T-cell (primary cell): ENCODE measurements at regions of chrX and their contacts with region 1.

Region 1: DNA sequence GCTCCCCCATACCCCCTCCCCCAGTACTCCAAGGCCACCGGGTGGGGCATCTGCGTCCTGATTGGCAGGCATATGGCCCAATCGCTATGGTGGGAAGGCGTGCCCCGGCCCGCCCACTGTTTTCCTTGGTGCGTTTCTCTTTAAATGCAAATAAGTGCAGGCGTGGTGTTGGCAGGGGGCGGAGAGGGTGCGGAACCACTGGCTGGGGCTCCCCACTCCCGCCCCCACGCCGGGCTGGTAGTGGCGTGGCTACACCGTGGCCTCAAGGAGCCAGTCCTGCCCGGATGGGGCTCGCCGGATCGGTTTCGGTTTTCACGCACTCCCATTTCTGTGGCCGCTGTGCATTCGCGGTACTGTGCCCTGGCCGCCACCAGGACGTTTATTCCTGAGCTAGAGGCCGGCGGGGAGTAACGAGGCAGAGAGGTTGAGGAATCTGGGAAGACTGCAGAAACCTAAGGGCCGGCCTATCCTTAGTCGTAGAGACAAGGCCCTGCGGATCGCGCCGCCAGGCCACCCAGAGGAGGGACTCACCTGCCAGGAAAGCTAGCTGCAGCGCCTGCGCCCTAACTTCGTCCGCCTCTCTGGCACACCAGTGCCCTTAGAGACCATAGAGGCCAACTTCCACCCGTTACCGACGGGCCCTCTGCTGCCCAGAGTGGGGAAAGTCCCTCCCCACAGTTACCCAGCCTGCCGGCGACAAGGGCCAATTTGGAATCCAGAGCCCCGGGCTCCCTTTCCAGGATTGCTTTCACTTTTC is 405 bp upstream of the AMER1 start:
- DNase-seq: peak; percentile 75 to 91 (median 82)
- ATAC-seq: peak; percentile 86 to 90 (median 88)
- H3K4me3 ChIP-seq: peak overlapping the region; percentile 64 to 84
- H3K4me3 Mint-ChIP-seq: peak overlapping the region; percentile 87 to 92 (median 88)
- H3K27ac ChIP-seq: peak overlapping the region; percentile 97
- H3K27ac Mint-ChIP-seq: peak overlapping the region; percentile 94
- H3K4me1 ChIP-seq: peaks cover 0 to 23% of the 10 kb centered on the region in 2 experiments
- H3K4me1 Mint-ChIP-seq: peaks cover 11 to 25% (median 18%) of the 10 kb centered on the region in 3 donors
- H3K27me3 ChIP-seq: no peaks in the 10 kb centered on the region
- H3K27me3 Mint-ChIP-seq: no peaks in the 10 kb centered on the region

Region 2: DNA sequence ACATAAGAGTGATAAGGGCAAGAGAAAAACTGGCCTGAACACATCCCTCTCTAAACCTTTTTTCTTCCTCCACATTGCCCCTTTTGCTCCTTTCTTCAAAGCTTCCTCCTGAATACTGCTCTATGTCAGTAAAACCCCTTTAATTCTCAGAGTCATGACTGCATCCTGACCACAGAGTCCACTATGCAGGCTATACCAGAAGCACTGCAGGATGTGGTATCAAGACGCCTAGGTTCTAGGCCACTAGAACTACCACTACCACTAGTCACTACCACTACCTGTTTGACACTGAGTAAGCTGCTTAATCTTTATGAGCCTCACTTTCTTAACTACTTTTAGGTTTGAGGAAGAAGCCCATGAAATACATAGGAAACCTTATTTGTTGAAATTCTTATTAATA is 459.6 kb before region 1 on chrX:
- CTCF ChIA-PET with region 1: no interaction called
- POLR2A ChIA-PET with region 1: interaction called in 1 of 2 experiments, 10 read pairs
- DNase-seq: peak in 25 of 35 experiments; percentile 1 to 50 (median 11)
- ATAC-seq: peak; percentile 77 to 97 (median 95)
- H3K4me3 ChIP-seq: no peak overlapping the region
- H3K4me3 Mint-ChIP-seq: peak overlapping the region in 1 of 3 donors; percentile 3
- H3K27ac ChIP-seq: peak overlapping the region; percentile 53
- H3K27ac Mint-ChIP-seq: peak overlapping the region; percentile 53 to 65
- H3K4me1 ChIP-seq: peaks cover 0 to 26% of the 10 kb centered on the region in 2 experiments
- H3K4me1 Mint-ChIP-seq: peaks cover 41 to 70% (median 50%) of the 10 kb centered on the region in 3 donors
- H3K27me3 ChIP-seq: no peaks in the 10 kb centered on the region
- H3K27me3 Mint-ChIP-seq: peaks cover 0 to 8% of the 10 kb centered on the region in 2 donors

Region 3: GRCh38 chrX:64218023-64218422 is 12.1 kb after region 1 on chrX:
- CTCF ChIA-PET with region 1: no interaction called
- POLR2A ChIA-PET with region 1: no interaction called
- DNase-seq: no peak
- ATAC-seq: no peak
- H3K4me3 ChIP-seq: no peak overlapping the region
- H3K4me3 Mint-ChIP-seq: no peak overlapping the region
- H3K27ac ChIP-seq: no peak overlapping the region
- H3K27ac Mint-ChIP-seq: no peak overlapping the region
- H3K4me1 ChIP-seq: no peaks in the 10 kb centered on the region
- H3K4me1 Mint-ChIP-seq: no peaks in the 10 kb centered on the region
- H3K27me3 ChIP-seq: no peaks in the 10 kb centered on the region
- H3K27me3 Mint-ChIP-seq: peaks cover 0 to 21% of the 10 kb centered on the region in 2 donors